ENCODE measurements at regions of chr2 and their contacts with region 1.

Region 1: GRCh38 chr2:222305516-222306392 is 7.0 kb upstream of the PAX3 start:
- DNase-seq: no peak
- ATAC-seq: no peak
- H3K4me3 Mint-ChIP-seq: peak overlapping the region; percentile 62
- H3K27ac Mint-ChIP-seq: no peak overlapping the region
- H3K4me1 Mint-ChIP-seq: peaks cover 25% of the 10 kb centered on the region
- H3K27me3 Mint-ChIP-seq: peaks cover 90% of the 10 kb centered on the region

Region 2: DNA sequence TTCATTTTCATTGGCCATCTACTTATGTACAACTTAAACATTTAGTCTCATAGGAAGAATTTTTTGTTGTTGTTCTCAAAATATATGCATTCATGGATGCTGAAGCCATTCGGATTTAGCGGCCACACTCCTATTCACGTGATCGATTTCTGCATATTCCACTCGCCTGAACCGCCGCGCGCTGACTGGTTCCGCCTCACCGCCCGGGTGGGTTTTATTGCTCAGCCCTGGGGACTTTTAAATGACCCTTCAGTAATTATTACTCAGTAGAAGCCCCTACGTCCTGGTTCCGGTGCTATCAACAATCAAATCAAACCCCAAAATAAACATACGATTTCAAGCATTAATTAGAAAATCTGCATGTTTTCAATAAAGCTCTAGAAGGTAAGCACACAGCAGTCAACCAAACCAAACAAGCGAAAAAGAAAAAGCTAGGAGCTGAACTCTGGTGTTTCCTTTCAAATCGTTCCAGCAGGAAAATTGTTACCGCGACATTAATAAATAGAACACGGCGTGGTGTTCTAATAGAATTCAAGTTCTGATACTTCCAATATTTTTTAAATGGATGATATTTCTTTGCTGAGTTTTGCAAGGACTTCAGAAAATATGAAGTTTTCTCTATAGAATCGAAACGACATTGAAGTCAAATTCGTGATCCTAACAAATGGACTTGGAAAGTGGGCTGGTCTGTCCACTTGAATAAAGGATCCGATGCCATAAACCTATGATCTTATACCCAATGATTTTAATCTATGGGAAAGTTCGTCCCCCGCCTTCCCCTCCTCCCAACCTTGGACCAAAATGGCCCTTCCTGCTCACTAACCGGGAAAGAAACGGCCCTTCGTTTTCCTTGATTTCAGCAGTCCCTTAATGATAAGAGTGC is 16.2 kb before region 1 on chr2:
- CTCF ChIA-PET with region 1: interaction called, 3 read pairs
- POLR2A ChIA-PET with region 1: no interaction called
- intact Hi-C with region 1: loop called in 1 of 2 experiments (anchors 2 kb)
- DNase-seq: no peak
- ATAC-seq: no peak
- H3K4me3 Mint-ChIP-seq: no peak overlapping the region
- H3K27ac Mint-ChIP-seq: no peak overlapping the region
- H3K4me1 Mint-ChIP-seq: peaks cover 8% of the 10 kb centered on the region
- H3K27me3 Mint-ChIP-seq: peaks cover 67% of the 10 kb centered on the region

Measured in activated CD4-positive, alpha-beta T cell treated with anti-CD3 and anti-CD28 coated beads for 36 hours (primary cell).